ENCODE measurements at regions of chr14 and their contacts with region 1.

Region 1: GRCh38 chr14:35826218-35826951 is at the start of gene BRMS1L:
- DNase-seq: peak; percentile 99
- H3K4me3 ChIP-seq: peak within 1 kb of the TSS; percentile 90
- H3K27ac ChIP-seq: peak within 1 kb of the TSS; percentile 54
- H3K4me1 ChIP-seq: peaks cover 13% of the 10 kb centered on the region
- CTCF ChIP-seq: no peak
- total RNA-seq, gene BRMS1L: 4.5 and 7.8 TPM in 2 replicates

Region 2: GRCh38 chr14:35808076-35808652 is 18.2 kb before region 1 on chr14:
- CTCF ChIA-PET with region 1: no interaction called
- POLR2A ChIA-PET with region 1: interaction called, 27 read pairs
- intact Hi-C with region 1: no loop called
- DNase-seq: peak; percentile 38
- H3K4me3 ChIP-seq: peak overlapping the region; percentile 73
- H3K27ac ChIP-seq: peak overlapping the region; percentile 83
- H3K4me1 ChIP-seq: peaks cover 19% of the 10 kb centered on the region
- CTCF ChIP-seq: no peak

Region 3: DNA sequence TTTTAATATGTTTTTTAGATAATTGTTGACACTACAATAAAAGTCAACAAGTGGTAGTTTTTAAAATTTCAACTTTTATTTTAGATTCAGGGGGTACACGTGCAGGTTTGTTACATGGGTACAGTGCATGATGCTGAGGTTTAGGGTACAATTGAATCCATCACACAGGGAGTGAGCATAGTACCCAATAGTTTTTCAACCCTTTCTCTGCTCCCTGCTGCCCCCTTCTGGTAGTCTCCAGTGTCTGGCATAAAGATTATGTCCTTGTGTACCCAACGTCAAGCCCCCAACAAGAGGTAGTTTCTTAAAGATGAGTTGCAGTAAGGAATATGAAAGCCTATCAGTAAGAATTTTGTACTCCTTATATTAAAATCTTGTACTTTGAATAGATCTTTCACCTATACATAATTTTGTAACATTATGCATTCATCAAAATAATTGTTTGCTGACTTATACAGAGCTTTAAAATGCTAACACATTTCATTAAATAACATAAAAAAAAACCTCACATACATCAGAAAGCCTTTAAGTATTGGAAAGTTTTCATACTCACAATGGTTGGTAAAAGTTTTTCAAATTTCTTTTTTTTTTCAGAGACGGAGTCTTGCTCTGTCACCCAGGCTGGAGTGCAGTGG is 11.9 kb before region 1 on chr14:
- CTCF ChIA-PET with region 1: interaction called, 13 read pairs
- POLR2A ChIA-PET with region 1: interaction called, 27 read pairs
- intact Hi-C with region 1: no loop called
- DNase-seq: peak; percentile 72
- H3K4me3 ChIP-seq: no peak overlapping the region
- H3K27ac ChIP-seq: no peak overlapping the region
- H3K4me1 ChIP-seq: no peaks in the 10 kb centered on the region
- CTCF ChIP-seq: peak; percentile 93

Region 4: DNA sequence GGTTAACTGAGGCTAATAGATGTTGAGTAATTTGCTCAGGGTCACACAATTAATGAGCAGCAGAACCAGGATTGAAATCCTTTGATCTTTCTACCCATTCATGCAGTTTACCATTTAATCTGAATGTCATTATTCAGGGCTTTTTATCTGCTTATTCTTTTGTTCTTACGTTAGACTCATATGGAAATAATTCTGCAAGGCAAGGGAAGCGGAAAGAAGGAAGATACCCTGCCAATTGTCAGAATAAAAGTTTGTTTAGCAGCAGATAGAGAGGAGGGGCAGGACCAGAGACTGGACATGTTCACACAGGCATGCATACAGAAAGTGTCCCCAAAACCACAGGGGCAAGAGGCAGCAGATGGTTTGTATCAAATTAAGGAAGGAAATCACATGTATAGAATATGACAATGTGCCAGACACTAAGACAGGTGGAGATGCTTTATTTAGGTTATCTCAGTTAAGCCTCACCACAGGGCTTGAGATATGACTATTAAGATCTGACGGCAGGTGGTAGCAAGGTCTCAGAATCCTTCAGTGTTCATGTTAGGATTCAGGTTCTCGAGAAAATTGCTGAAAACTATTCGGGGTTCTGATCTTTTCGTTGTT is 29.6 kb after region 1 on chr14:
- CTCF ChIA-PET with region 1: no interaction called
- POLR2A ChIA-PET with region 1: interaction called, 17 read pairs
- intact Hi-C with region 1: loop called (anchors 1 kb)
- DNase-seq: peak; percentile 93
- H3K4me3 ChIP-seq: peak overlapping the region; percentile 59
- H3K27ac ChIP-seq: peak overlapping the region; percentile 82
- H3K4me1 ChIP-seq: peaks cover 60% of the 10 kb centered on the region
- CTCF ChIP-seq: peak; percentile 68

Region 5: DNA sequence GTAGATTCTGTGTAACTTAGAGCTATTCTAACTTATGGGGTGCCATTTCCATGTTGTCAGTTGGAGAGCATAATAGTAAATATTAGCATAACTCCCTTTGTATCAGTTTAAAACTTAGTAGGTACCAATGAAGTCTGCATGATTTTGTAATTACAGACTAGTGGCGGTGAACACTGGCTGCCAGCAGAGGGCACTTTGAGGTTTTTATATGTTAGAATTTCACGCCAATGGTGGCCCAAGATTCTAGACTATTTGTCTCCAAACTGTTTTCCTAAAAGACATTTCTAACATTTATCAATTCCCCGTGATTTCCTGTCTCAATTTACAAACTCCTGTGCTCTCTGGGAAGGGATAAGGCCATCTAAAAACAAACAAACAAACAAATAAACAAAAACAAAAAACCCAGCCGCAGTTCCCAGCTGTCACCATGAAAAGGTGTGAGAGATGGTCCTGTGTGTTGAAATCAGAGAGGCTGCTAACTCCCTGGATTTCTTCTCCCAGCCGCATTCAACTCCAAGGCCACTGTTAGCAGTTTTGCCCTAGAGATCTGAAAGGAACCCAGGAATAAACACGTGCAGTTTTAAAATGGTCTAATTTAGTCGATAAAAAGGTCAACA is 57.4 kb after region 1 on chr14:
- CTCF ChIA-PET with region 1: no interaction called
- POLR2A ChIA-PET with region 1: no interaction called
- intact Hi-C with region 1: no loop called
- DNase-seq: peak; percentile 49
- H3K4me3 ChIP-seq: no peak overlapping the region
- H3K27ac ChIP-seq: no peak overlapping the region
- H3K4me1 ChIP-seq: no peaks in the 10 kb centered on the region
- CTCF ChIP-seq: peak; percentile 96